CD8-positive, alpha-beta memory T cell (primary cell): ENCODE measurements at regions of chr14 and their contacts with region 1.

Region 1: GRCh38 chr14:92503756-92504491 is 9.7 kb upstream of the RIN3 start:
- DNase-seq: no peak
- H3K4me3 ChIP-seq: no peak overlapping the region
- H3K4me3 Mint-ChIP-seq: no peak overlapping the region
- H3K27ac ChIP-seq: no peak overlapping the region
- H3K27ac Mint-ChIP-seq: peak overlapping the region in 1 of 8 donors; percentile 71
- H3K4me1 ChIP-seq: peaks cover 14% of the 10 kb centered on the region
- H3K4me1 Mint-ChIP-seq: peaks cover 17 to 20% (median 20%) of the 10 kb centered on the region in 3 donors
- H3K27me3 ChIP-seq: no peaks in the 10 kb centered on the region
- H3K27me3 Mint-ChIP-seq: peaks cover 0 to 3% of the 10 kb centered on the region in 2 donors

Region 2: GRCh38 chr14:92516966-92517506 is 13.1 kb after region 1 on chr14:
- CTCF ChIA-PET with region 1: interaction called, 5 read pairs
- POLR2A ChIA-PET with region 1: interaction called, 10 read pairs
- DNase-seq: no peak
- H3K4me3 ChIP-seq: no peak overlapping the region
- H3K4me3 Mint-ChIP-seq: peak overlapping the region; percentile 48 to 85 (median 61)
- H3K27ac ChIP-seq: no peak overlapping the region
- H3K27ac Mint-ChIP-seq: peak overlapping the region; percentile 75 to 94 (median 90)
- H3K4me1 ChIP-seq: peaks cover 61% of the 10 kb centered on the region
- H3K4me1 Mint-ChIP-seq: peaks cover 73 to 86% (median 75%) of the 10 kb centered on the region in 3 donors
- H3K27me3 ChIP-seq: no peaks in the 10 kb centered on the region
- H3K27me3 Mint-ChIP-seq: peaks cover 0 to 3% of the 10 kb centered on the region in 2 donors

Region 3: DNA sequence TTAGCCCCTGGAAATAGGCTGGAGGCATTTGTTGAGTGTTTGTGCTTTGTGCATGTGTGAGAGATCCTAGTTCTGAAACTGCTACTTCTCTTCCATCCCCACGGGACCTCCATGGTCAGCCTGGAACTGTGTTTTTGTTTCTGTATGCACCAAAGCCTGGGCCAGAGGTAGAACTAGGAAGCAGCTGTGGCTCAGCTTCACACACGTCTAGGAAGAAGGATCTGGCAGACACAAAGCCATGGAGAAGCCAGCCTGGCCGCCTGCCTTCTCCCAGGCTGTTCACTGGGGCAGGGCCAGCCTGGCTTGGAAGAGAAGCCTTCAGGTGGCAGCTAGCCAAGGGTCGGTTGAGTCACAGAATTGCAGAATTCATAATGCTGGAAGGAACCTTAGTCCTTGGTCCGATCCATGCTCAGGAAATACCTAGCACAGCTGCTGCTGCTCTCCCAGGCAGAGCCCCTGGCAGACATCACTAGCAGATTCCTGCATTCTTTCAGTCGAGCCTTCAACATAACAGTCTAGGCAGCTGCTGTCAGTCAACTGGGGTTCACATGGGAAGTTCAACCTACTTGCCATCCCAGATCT is 36.6 kb after region 1 on chr14:
- CTCF ChIA-PET with region 1: no interaction called
- POLR2A ChIA-PET with region 1: no interaction called
- DNase-seq: no peak
- H3K4me3 ChIP-seq: no peak overlapping the region
- H3K4me3 Mint-ChIP-seq: peak overlapping the region in 6 of 7 donors; percentile 13 to 66 (median 54)
- H3K27ac ChIP-seq: no peak overlapping the region
- H3K27ac Mint-ChIP-seq: peak overlapping the region; percentile 24 to 80 (median 54)
- H3K4me1 ChIP-seq: peaks cover 42% of the 10 kb centered on the region
- H3K4me1 Mint-ChIP-seq: peaks cover 46 to 87% (median 64%) of the 10 kb centered on the region in 3 donors
- H3K27me3 ChIP-seq: no peaks in the 10 kb centered on the region
- H3K27me3 Mint-ChIP-seq: no peaks in the 10 kb centered on the region